Activated naive CD4-positive, alpha-beta T cell treated with anti-CD3 and anti-CD28 coated beads, Interleukin-2, amount 10 ng/mL, durations not matched to agents 7 days and 5 days (primary cell): ENCODE measurements at regions of chr9 and their contacts with region 1.

Region 1: DNA sequence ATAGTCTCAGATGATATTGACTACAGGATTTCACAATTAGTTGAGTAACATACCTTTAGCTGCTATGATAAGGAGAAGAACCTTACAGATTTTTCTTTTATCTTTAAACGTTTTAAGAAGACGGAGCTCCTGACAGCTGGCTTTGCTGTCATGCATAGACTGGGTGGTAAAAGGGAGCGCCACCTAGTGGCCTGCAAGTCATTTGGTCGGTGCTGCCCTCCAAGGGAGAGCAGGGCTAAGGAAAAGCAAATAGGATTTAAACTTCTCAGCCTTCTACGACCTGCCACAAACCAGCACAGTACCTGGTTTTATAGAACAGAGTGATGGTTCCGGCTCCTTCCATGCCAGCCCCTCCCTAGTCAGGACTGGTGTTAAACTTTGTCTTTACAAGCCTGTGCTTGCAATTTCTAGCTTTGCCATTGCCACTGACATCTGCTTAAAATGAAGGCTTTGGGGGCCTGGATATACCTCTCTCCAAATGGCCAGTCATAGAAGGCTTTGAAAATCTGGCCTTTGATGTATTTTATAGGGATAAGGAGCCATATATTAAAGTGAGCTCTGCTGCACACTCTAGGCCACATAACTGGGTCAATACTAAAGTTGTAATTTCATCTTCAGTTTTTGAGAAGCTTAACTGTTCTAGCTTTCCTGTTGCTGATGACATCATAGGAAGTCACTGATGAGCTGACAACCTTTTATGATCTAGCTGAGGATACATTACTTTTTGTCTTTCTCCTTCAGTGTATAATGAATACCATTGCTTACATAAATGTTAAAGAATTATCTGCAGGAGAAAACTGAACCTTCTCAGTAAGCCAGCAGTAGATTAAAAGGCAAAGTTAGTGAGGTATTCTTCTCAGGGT is 31.1 kb upstream of the ADAMTSL1 start:
- DNase-seq: peak; percentile 64
- H3K4me3 Mint-ChIP-seq: no peak overlapping the region
- H3K27ac Mint-ChIP-seq: no peak overlapping the region
- H3K4me1 Mint-ChIP-seq: no peaks in the 10 kb centered on the region
- H3K27me3 Mint-ChIP-seq: peaks cover 17% of the 10 kb centered on the region

Region 2: DNA sequence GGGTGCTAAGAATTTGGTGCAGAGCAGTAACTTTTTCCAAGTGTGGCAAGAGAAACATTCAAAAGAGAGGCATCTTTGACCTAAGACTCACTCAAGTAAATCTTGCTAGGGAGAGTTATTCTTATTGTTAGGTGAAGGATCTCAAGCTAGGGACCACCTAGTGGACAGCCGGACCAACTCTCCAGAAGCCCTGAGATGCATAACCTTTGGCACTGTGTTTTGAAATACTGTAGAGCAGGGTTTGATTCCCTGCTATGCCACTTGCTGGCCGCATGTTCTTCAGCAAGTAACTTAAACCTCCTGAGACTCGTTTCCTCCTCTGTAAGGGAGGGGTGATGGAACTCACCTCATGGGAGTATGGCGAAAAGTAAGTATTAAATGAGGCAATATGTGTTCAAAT is 305.0 kb before region 1 on chr9:
- CTCF ChIA-PET with region 1: no interaction called
- DNase-seq: no peak
- H3K4me3 Mint-ChIP-seq: no peak overlapping the region
- H3K27ac Mint-ChIP-seq: no peak overlapping the region
- H3K4me1 Mint-ChIP-seq: no peaks in the 10 kb centered on the region
- H3K27me3 Mint-ChIP-seq: no peaks in the 10 kb centered on the region

Region 3: GRCh38 chr9:19028835-19029451 is 586.1 kb after region 1 on chr9:
- CTCF ChIA-PET with region 1: interaction called, 13 read pairs
- DNase-seq: peak; percentile 46
- H3K4me3 Mint-ChIP-seq: no peak overlapping the region
- H3K27ac Mint-ChIP-seq: no peak overlapping the region
- H3K4me1 Mint-ChIP-seq: peaks cover 2% of the 10 kb centered on the region
- H3K27me3 Mint-ChIP-seq: peaks cover 11% of the 10 kb centered on the region